PC-9 (cell line): ENCODE measurements at regions of chr17 and their contacts with region 1.

Region 1: DNA sequence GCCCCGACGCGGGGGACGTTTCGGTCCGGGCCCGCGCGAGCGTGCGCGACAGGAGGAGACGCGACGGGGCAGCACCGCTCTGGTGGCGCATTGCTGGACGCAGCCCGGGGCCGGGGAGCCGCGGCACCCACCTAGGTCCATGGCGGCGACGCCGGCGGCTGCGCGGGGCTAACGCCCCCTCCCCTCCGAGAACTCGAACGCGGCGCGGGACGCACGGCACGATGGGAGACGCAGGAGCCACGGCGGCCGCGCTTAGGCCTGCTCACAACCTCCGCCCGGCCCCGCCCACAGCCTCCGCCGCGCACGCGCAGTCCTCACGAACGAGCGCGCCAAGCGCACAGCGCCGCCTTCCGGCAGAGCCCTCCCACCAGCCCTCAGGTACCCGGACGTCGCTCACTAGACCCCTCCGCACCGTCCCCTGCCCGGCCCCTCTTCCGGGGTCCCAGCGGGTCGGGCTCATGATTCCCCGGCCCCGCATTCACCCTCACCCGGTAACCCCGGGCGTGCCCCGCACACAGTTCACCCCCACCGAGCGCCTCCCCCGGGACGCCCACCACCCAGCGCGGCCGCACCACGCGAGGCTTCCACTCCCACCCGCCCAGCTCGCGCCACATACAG is at the start of gene GEMIN4:
- DNase-seq: peak; percentile 68 to 97
- H3K4me3 ChIP-seq: peak within 1 kb of the TSS; percentile 74
- H3K27ac ChIP-seq: peak within 1 kb of the TSS; percentile 51
- H3K4me1 ChIP-seq: peaks cover 18% of the 10 kb centered on the region
- H3K27me3 ChIP-seq: no peaks in the 10 kb centered on the region
- CTCF ChIP-seq: peak; percentile 92
- total RNA-seq, gene GEMIN4: 41.4 and 47.4 TPM in 2 replicates

Region 2: GRCh38 chr17:409848-410545 is 342.1 kb before region 1 on chr17:
- CTCF ChIA-PET with region 1: no interaction called
- POLR2A ChIA-PET with region 1: no interaction called
- intact Hi-C with region 1: loop called (anchors 1 kb)
- DNase-seq: peak; percentile 96 to 100
- H3K4me3 ChIP-seq: peak overlapping the region; percentile 97
- H3K27ac ChIP-seq: no peak overlapping the region
- H3K4me1 ChIP-seq: peaks cover 11% of the 10 kb centered on the region
- H3K27me3 ChIP-seq: no peaks in the 10 kb centered on the region
- CTCF ChIP-seq: no peak

Region 3: GRCh38 chr17:716238-716637 is 35.9 kb before region 1 on chr17:
- CTCF ChIA-PET with region 1: no interaction called
- POLR2A ChIA-PET with region 1: no interaction called
- intact Hi-C with region 1: loop called (anchors 2 kb)
- DNase-seq: no peak
- H3K4me3 ChIP-seq: no peak overlapping the region; the same call in 1 of the 2 replicates
- H3K27ac ChIP-seq: no peak overlapping the region
- H3K4me1 ChIP-seq: peaks cover 26% of the 10 kb centered on the region
- H3K27me3 ChIP-seq: no peaks in the 10 kb centered on the region
- CTCF ChIP-seq: no peak

Region 4: GRCh38 chr17:732067-732901 is 19.8 kb before region 1 on chr17 and contains the start of gene TLCD3A:
- CTCF ChIA-PET with region 1: interaction called, 3 read pairs
- POLR2A ChIA-PET with region 1: interaction called, 11 read pairs
- intact Hi-C with region 1: no loop called
- DNase-seq: peak; percentile 42 to 87
- H3K4me3 ChIP-seq: peak within 1 kb of the TSS; percentile 96
- H3K27ac ChIP-seq: no peak within 1 kb of the TSS
- H3K4me1 ChIP-seq: peaks cover 12% of the 10 kb centered on the region
- H3K27me3 ChIP-seq: no peaks in the 10 kb centered on the region
- CTCF ChIP-seq: no peak
- total RNA-seq, gene TLCD3A: 13.4 and 29.4 TPM in 2 replicates

Region 5: GRCh38 chr17:794876-795275 is 42.8 kb after region 1 on chr17:
- CTCF ChIA-PET with region 1: interaction called, 15 read pairs
- POLR2A ChIA-PET with region 1: no interaction called
- intact Hi-C with region 1: no loop called
- DNase-seq: peak; percentile 42 to 54
- H3K4me3 ChIP-seq: no peak overlapping the region
- H3K27ac ChIP-seq: no peak overlapping the region
- H3K4me1 ChIP-seq: no peaks in the 10 kb centered on the region
- H3K27me3 ChIP-seq: no peaks in the 10 kb centered on the region
- CTCF ChIP-seq: peak; percentile 82

Region 6: DNA sequence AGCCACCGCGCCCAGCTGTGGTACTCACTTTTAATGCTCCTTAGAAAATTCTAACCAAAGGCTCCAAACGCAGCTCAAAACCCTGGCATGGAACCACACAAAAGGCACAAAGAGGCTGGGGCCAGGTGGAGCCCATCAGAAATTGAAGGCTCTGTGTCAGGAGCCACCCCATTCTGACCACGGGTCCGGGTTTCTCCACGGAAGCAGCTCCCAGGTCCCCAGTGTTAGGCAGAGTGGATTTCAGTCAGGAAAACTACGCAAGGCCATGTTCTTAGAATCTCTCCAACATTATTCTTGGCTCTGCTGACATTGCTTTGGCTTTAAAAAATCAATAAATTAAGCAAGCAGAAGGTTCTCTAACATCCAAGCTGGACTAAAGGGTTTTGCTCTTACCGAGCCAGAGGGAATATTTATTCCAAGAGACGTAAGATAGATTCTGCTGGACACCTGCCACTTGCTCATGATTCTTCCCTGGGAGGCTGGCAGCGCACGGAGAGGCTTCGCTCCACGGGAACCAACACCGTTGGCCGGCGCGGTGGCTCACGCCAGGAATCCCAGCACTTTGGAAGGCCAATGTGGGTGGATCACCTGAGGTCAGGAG is 134.0 kb after region 1 on chr17:
- CTCF ChIA-PET with region 1: no interaction called
- POLR2A ChIA-PET with region 1: interaction called, 14 read pairs
- intact Hi-C with region 1: no loop called
- DNase-seq: no peak
- H3K4me3 ChIP-seq: no peak overlapping the region
- H3K27ac ChIP-seq: no peak overlapping the region
- H3K4me1 ChIP-seq: peaks cover 11% of the 10 kb centered on the region; the same call in 1 of the 2 replicates
- H3K27me3 ChIP-seq: no peaks in the 10 kb centered on the region
- CTCF ChIP-seq: no peak

Region 7: DNA sequence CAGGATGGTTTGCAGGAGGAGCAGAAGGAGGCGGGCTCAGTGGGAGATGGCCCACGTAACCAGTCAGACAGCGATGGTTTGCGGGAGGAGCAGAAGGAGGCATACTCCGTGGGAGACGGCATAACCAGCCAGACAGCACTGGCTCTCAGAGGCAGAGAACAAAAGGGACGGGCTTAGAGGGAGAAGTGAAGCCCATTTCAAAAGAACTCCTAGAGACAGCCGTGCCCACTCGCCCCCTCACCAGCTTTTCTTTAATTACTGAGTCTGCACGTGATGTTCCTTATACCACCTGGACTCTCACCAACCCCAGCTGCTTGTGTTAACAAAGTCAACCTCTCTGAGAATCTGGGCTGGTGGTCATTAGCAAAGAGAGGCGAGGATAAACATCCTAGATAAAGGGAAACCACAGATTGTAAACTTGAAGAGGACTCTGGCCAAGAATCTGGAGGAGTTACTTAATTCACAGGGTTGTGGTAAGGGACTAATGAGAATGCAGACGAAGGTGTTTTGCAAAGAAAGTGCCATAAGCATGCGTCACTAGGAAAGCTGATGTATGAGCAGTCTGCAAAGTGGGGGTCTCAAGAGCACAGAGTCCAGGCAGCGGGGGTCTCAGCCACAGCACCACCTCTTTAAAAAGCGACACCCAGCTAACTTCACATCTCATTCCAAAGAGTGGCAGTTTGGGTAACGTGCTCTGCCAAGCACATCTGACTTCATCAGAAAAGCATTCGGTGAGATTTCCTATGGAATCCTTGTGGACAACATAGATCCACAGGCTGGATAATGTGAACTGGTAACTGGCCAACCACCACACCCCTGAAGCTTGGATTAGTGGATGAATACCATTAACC is 175.7 kb after region 1 on chr17:
- CTCF ChIA-PET with region 1: interaction called, 17 read pairs
- POLR2A ChIA-PET with region 1: no interaction called
- intact Hi-C with region 1: no loop called
- DNase-seq: peak; percentile 83 to 97
- H3K4me3 ChIP-seq: peak overlapping the region; percentile 29; the same call in 1 of the 2 replicates
- H3K27ac ChIP-seq: peak overlapping the region; percentile 84
- H3K4me1 ChIP-seq: peaks cover 60% of the 10 kb centered on the region
- H3K27me3 ChIP-seq: no peaks in the 10 kb centered on the region
- CTCF ChIP-seq: no peak